CD14-positive monocyte (primary cell): ENCODE measurements at regions of chr22 and their contacts with region 1.

Region 1: GRCh38 chr22:38705235-38706100 is at the start of gene GTPBP1:
- DNase-seq: peak; percentile 100
- H3K4me3 ChIP-seq: peak within 1 kb of the TSS; percentile 87 to 98 (median 88)
- H3K4me3 Mint-ChIP-seq: peak within 1 kb of the TSS; percentile 92
- H3K27ac ChIP-seq: peak within 1 kb of the TSS; percentile 62 to 85
- H3K27ac Mint-ChIP-seq: peak within 1 kb of the TSS; percentile 94 to 97 (median 95)
- H3K4me1 ChIP-seq: peaks cover 47 to 53% of the 10 kb centered on the region in 2 donors
- H3K4me1 Mint-ChIP-seq: peaks cover 50% of the 10 kb centered on the region
- H3K27me3 ChIP-seq: peaks cover 0 to 2% of the 10 kb centered on the region in 2 donors
- H3K27me3 Mint-ChIP-seq: peaks cover 5 to 13% (median 8%) of the 10 kb centered on the region in 3 donors
- CTCF ChIP-seq: no peak
- polyA plus RNA-seq, gene GTPBP1: 6.7 to 41.4 (median 12.7) TPM

Region 2: GRCh38 chr22:38681784-38682335 is 23.6 kb before region 1 on chr22 and contains the start of gene TOMM22:
- intact Hi-C with region 1: loop called in 1 of 2 experiments (anchors 2 kb)
- DNase-seq: peak; percentile 85 to 90 (median 88)
- H3K4me3 ChIP-seq: peak within 1 kb of the TSS; percentile 69 to 90 (median 75)
- H3K4me3 Mint-ChIP-seq: peak within 1 kb of the TSS; percentile 98 to 99
- H3K27ac ChIP-seq: peak within 1 kb of the TSS; percentile 36 to 88
- H3K27ac Mint-ChIP-seq: peak within 1 kb of the TSS; percentile 90 to 98 (median 97)
- H3K4me1 ChIP-seq: peaks cover 11 to 16% of the 10 kb centered on the region in 2 donors
- H3K4me1 Mint-ChIP-seq: peaks cover 12% of the 10 kb centered on the region
- H3K27me3 ChIP-seq: no peaks in the 10 kb centered on the region
- H3K27me3 Mint-ChIP-seq: peaks cover 2 to 7% (median 7%) of the 10 kb centered on the region in 3 donors
- CTCF ChIP-seq: peak; percentile 69
- polyA plus RNA-seq, gene TOMM22: 31.9 to 71.4 (median 58.0) TPM

Region 3: DNA sequence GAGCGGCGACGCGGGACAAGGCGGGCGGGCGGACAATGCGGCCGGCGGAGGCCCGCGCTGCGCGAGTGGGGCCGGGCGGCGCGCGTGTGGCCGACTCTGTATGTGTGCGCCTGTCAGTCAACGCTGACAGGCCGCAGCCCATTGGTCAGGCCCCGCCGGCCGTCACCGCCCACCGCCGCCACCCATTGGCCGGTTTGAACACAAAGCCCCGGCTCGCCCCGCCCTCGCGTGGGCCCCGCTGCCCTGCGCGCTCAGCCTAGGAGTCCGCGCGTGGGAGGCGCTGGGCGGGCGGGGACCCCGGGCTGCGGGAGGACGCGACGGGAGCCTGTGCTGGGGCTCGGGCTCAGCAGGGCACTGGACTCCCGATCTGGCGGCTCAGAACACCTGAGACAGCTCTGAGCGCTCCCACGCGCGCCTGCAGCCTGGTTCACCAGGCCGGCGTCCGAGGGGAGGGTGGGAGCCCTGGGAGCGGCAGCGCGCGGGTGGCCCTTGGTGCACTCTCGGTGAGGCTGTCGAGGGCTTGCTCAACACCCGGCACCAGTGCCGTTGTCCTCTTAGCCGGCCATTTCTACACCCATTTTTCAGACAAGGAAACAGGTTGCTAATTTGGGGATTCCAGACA is 50.6 kb after region 1 on chr22 and contains the start of gene SUN2:
- intact Hi-C with region 1: loop called (anchors 5 kb)
- DNase-seq: peak; percentile 89 to 90 (median 90)
- H3K4me3 ChIP-seq: peak within 1 kb of the TSS; percentile 88 to 98 (median 92)
- H3K4me3 Mint-ChIP-seq: peak within 1 kb of the TSS; percentile 93 to 97
- H3K27ac ChIP-seq: peak within 1 kb of the TSS; percentile 99 to 100
- H3K27ac Mint-ChIP-seq: peak within 1 kb of the TSS; percentile 98 to 100 (median 99)
- H3K4me1 ChIP-seq: peaks cover 64 to 70% of the 10 kb centered on the region in 2 donors
- H3K4me1 Mint-ChIP-seq: peaks cover 68% of the 10 kb centered on the region
- H3K27me3 ChIP-seq: no peaks in the 10 kb centered on the region
- H3K27me3 Mint-ChIP-seq: peaks cover 0 to 3% (median 0%) of the 10 kb centered on the region in 3 donors
- CTCF ChIP-seq: no peak
- polyA plus RNA-seq, gene SUN2: 95.8 to 159 (median 97.8) TPM